ENCODE measurements at regions of chr9 and their contacts with region 1.

Region 1: DNA sequence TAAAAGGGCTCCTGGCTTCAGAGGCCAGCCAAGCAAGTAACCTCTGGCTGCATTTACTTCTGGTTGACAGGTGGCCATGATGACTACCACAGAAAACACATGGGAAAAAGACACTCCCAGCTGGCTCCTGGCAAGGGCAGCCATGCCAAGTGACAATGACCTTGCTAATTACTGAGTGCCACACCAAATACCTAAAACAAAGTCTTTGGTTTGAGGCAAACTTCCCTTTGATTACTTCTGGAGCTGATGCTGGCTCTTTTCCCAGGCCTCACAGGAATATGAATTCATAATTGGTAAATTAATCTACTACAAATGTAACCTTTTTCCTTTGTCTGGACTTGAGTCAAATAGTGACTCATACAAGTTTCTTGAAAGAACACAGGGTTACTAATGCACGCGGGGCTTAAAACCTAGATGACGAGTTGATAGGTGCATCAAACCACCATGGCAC is 61.0 kb downstream of the LPAR1 start:
- DNase-seq: no peak
- ATAC-seq: peak; percentile 29
- H3K4me3 ChIP-seq: no peak overlapping the region
- H3K27ac ChIP-seq: no peak overlapping the region
- H3K4me1 ChIP-seq: no peaks in the 10 kb centered on the region
- H3K27me3 ChIP-seq: no peaks in the 10 kb centered on the region
- CTCF ChIP-seq: no peak
- EP300 ChIP-seq: no peak
- POLR2A ChIP-seq: no peak
- RAD21 ChIP-seq: no peak

Region 2: GRCh38 chr9:109311731-109312130 is 1665.6 kb before region 1 on chr9:
- CTCF ChIA-PET with region 1: no interaction called
- POLR2A ChIA-PET with region 1: no interaction called
- RAD21 ChIA-PET with region 1: no interaction called
- SMC1A ChIA-PET with region 1: no interaction called
- in situ Hi-C with region 1: no loop called
- intact Hi-C with region 1: no loop called
- DNase-seq: no peak
- ATAC-seq: peak; percentile 92
- H3K4me3 ChIP-seq: no peak overlapping the region
- H3K27ac ChIP-seq: no peak overlapping the region
- H3K4me1 ChIP-seq: no peaks in the 10 kb centered on the region
- H3K27me3 ChIP-seq: peaks cover 1 to 3% of the 10 kb centered on the region in 2 experiments; a peak in 2 of 4 replicates
- CTCF ChIP-seq: no peak
- EP300 ChIP-seq: no peak
- POLR2A ChIP-seq: no peak
- RAD21 ChIP-seq: no peak

Region 3: GRCh38 chr9:111005746-111006470 is 28.6 kb after region 1 on chr9:
- CTCF ChIA-PET with region 1: no interaction called
- POLR2A ChIA-PET with region 1: no interaction called
- RAD21 ChIA-PET with region 1: interaction called, 15 read pairs
- SMC1A ChIA-PET with region 1: interaction called, 97 read pairs
- in situ Hi-C with region 1: no loop called
- intact Hi-C with region 1: no loop called
- DNase-seq: no peak
- ATAC-seq: peak; percentile 59
- H3K4me3 ChIP-seq: no peak overlapping the region
- H3K27ac ChIP-seq: no peak overlapping the region
- H3K4me1 ChIP-seq: no peaks in the 10 kb centered on the region
- H3K27me3 ChIP-seq: no peaks in the 10 kb centered on the region
- CTCF ChIP-seq: no peak
- EP300 ChIP-seq: no peak
- POLR2A ChIP-seq: no peak
- RAD21 ChIP-seq: no peak

Measured in GM12878 (cell line).